Activated CD8-positive, alpha-beta T cell treated with anti-CD3 and anti-CD28 coated beads, Interleukin-2, amount 10 ng/mL, durations not matched to agents 7 days and 5 days (primary cell): ENCODE measurements at regions of chr2 and their contacts with region 1.

Region 1: GRCh38 chr2:229800997-229801754 is 86.8 kb upstream of the DNER start:
- DNase-seq: peak; percentile 82
- ATAC-seq: peak; percentile 73
- H3K4me3 Mint-ChIP-seq: no peak overlapping the region
- H3K27ac Mint-ChIP-seq: no peak overlapping the region
- H3K4me1 Mint-ChIP-seq: no peaks in the 10 kb centered on the region
- H3K27me3 Mint-ChIP-seq: no peaks in the 10 kb centered on the region

Region 2: GRCh38 chr2:229780856-229781773 is 20.1 kb before region 1 on chr2:
- CTCF ChIA-PET with region 1: interaction called, 22 read pairs
- POLR2A ChIA-PET with region 1: interaction called, 3 read pairs
- DNase-seq: no peak
- ATAC-seq: peak; percentile 75
- H3K4me3 Mint-ChIP-seq: no peak overlapping the region
- H3K27ac Mint-ChIP-seq: no peak overlapping the region
- H3K4me1 Mint-ChIP-seq: peaks cover 6% of the 10 kb centered on the region
- H3K27me3 Mint-ChIP-seq: no peaks in the 10 kb centered on the region

Region 3: DNA sequence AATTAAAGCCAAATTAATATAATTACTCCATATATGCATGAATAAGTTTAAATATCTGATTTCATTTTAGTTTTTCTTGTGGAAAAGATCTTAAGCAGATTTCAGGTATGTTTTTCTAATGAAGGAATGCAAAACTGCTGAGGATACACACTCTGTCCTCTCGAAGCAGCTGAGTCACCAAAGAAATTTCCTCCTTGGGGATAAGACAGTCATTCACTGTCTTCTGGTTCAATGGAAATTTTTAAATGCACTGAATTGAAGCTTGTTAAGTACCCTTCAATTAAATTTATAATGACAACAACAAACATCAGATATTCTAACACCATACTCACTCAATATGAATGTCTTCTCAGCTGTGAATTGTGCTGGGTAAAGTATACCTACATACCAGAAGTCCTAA is 14.7 kb after region 1 on chr2:
- CTCF ChIA-PET with region 1: interaction called, 17 read pairs
- POLR2A ChIA-PET with region 1: no interaction called
- DNase-seq: no peak
- ATAC-seq: no peak
- H3K4me3 Mint-ChIP-seq: no peak overlapping the region
- H3K27ac Mint-ChIP-seq: no peak overlapping the region
- H3K4me1 Mint-ChIP-seq: no peaks in the 10 kb centered on the region
- H3K27me3 Mint-ChIP-seq: no peaks in the 10 kb centered on the region

Region 4: DNA sequence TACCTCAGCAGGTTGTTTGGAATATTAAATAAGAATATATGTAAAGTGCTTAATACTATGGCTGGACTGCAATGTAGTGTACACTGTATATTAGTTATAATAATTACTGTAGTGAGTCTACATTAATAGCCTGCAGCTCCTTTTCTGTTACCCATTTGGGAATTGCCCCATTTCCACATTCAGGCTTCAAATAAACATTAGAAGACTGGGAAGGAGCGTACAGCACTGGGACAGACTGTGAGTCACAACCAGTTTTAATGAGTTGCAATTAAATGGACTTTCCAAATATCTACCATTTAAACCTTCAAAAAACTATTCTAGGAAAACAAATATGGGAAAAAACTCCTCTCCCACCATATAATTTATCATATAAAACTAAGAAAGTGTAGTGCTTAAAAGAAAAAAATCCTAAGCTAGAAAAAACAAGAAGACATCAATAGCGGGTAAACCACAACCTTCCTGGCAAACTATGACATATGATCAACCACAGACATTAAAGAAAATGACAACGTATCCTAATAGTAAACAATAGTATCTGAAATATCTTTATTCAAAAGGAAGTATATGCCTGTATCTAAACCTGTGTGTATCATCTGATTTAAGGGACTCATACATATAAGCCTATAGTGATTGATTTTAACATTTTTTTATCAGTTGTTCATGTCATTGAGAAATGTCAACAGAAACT is 34.6 kb after region 1 on chr2:
- CTCF ChIA-PET with region 1: interaction called, 10 read pairs
- POLR2A ChIA-PET with region 1: no interaction called
- DNase-seq: no peak
- ATAC-seq: peak; percentile 55
- H3K4me3 Mint-ChIP-seq: no peak overlapping the region
- H3K27ac Mint-ChIP-seq: no peak overlapping the region
- H3K4me1 Mint-ChIP-seq: peaks cover 43% of the 10 kb centered on the region
- H3K27me3 Mint-ChIP-seq: no peaks in the 10 kb centered on the region

Region 5: DNA sequence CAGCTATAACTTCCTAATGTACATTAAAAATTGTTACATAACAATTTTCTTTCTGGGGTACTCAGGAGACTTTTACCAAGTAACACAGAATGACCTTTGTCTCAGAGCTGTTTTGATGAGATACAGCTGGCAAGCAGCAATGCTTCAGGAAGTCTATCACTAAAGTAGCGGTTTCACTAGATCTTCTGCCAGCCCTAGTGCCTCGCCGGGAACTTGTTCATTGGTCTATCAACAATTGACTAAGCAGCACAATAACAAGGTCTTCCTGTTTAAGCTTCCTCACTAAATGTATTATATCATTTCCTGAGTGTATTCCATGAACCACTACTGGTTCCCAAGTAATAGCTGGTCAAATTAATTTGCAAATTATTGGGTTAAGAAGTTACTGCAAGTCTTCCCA is 51.4 kb after region 1 on chr2:
- CTCF ChIA-PET with region 1: interaction called, 13 read pairs
- POLR2A ChIA-PET with region 1: no interaction called
- DNase-seq: peak; percentile 63
- ATAC-seq: peak; percentile 94
- H3K4me3 Mint-ChIP-seq: no peak overlapping the region
- H3K27ac Mint-ChIP-seq: peak overlapping the region; percentile 5
- H3K4me1 Mint-ChIP-seq: peaks cover 38% of the 10 kb centered on the region
- H3K27me3 Mint-ChIP-seq: no peaks in the 10 kb centered on the region

Region 6: DNA sequence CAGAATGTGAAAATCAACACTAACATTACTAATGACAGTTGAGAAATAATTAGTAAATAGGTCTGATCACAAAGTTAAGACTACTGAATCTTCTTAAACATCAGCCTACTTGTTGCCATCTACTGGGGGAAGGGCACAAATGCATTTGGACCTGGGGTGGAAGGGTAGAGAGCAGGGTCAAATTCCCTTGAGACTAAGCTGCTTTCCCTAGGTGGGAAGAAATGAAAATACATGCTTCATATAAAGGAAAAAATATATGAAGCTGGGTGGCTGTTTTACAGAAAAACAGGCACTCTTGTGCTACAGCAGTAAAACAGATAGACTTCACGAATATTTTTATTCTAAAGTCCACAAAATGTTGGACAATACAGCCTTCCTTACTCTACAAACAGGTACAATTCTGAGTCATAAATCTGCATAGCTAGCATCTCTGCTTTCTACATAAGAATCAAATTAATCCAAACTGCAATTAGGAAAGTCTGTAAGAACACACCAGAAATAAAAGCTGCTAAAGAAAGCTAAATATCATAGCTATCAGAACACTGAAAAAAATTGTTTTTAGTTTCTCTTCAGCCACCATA is 109.7 kb after region 1 on chr2:
- CTCF ChIA-PET with region 1: interaction called, 81 read pairs
- POLR2A ChIA-PET with region 1: no interaction called
- DNase-seq: peak; percentile 30
- ATAC-seq: peak; percentile 58
- H3K4me3 Mint-ChIP-seq: no peak overlapping the region
- H3K27ac Mint-ChIP-seq: no peak overlapping the region
- H3K4me1 Mint-ChIP-seq: peaks cover 42% of the 10 kb centered on the region
- H3K27me3 Mint-ChIP-seq: no peaks in the 10 kb centered on the region